Activated naive CD4-positive, alpha-beta T cell treated with anti-CD3 and anti-CD28 coated beads for 36 hours (primary cell): ENCODE measurements at regions of chr7 and their contacts with region 1.

Region 1: GRCh38 chr7:5704534-5704922 is 76.9 kb downstream of the RNF216 start:
- DNase-seq: peak; percentile 92
- H3K4me3 Mint-ChIP-seq: no peak overlapping the region
- H3K27ac Mint-ChIP-seq: no peak overlapping the region
- H3K4me1 Mint-ChIP-seq: peaks cover 75% of the 10 kb centered on the region
- H3K27me3 Mint-ChIP-seq: no peaks in the 10 kb centered on the region

Region 2: DNA sequence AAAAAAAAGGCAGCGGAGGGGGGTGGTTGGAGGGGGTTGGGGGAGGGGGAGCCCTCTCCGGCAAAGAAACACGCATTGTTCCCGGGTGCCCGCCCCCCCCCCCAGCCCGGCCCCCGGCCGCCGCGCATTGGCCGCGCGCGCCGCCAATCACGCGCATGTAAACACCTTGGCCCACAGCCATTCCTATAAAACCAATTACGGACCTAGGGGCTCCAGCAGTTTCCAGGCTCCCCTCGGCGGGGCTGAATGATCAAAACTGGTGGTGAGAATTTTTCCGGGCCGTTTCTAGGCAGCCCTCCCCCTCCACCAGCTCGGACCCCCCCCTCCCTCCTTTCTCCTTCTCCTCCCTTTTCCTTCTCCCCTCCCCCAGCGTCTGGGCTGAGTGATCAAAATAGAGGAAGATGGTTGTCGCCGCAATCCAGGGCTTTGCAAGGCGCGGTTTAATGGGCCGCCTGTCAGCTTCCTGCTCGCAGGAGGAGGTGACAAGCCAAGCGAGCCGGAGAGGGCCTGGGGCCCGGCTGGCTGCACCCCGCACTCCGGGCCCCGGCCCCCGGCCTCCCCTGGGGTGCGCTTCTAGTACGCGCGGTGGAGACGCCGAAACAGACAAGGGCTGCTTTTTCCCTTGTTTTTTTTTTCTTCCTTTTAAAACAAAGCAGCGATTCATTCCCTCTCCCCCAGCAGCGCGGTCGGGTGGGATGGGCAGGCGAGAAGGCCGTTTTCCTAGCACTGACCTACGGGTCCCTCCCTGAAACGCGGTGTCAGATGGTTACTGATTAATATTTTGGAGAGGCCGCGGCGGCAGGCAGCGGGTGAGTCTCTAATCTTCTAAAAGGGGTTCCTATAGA is 280.5 kb before region 1 on chr7:
- CTCF ChIA-PET with region 1: no interaction called
- intact Hi-C with region 1: loop called (anchors 5 kb)
- DNase-seq: peak; percentile 62
- H3K4me3 Mint-ChIP-seq: peak overlapping the region; percentile 67
- H3K27ac Mint-ChIP-seq: peak overlapping the region; percentile 24
- H3K4me1 Mint-ChIP-seq: peaks cover 43% of the 10 kb centered on the region
- H3K27me3 Mint-ChIP-seq: peaks cover 64% of the 10 kb centered on the region

Region 3: DNA sequence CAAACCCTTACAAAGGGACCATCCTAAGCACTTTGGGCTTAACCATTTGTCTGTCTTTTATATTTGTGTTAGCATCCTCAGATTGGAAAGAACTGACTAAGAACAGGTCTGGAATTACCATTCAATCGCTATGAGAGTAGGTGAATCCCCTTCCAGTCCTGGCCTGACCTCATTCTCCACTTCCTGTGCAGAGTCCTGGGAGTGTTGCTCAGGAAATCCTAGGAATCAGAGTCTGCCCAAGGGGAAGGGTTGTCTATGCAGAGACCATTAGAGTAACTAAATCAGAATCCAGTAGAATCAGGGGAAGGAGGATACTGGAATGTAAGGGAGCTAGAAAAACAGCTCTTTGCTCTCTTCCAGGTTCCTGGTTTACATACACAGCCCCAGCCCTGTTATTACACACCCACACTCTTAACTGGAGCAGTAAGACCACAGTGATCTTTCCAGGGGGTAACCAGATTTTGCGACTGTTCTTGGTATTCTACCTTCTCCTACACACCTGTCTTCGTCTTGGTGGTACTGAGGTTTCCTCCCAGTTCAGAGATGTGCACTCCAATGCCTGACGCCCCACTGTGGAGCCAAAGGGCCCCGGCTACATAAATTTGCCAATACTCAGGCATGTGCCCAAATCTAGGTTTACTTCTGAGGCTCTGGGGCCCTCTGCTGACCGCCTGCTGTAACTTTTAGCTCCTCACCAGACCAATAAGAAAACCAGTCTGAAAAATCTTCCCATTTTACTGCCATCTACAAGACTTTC is 26.8 kb before region 1 on chr7:
- CTCF ChIA-PET with region 1: interaction called, 16 read pairs
- intact Hi-C with region 1: no loop called
- DNase-seq: peak; percentile 74
- H3K4me3 Mint-ChIP-seq: no peak overlapping the region
- H3K27ac Mint-ChIP-seq: peak overlapping the region; percentile 3
- H3K4me1 Mint-ChIP-seq: peaks cover 50% of the 10 kb centered on the region
- H3K27me3 Mint-ChIP-seq: no peaks in the 10 kb centered on the region

Region 4: GRCh38 chr7:5689118-5689517 is 15.4 kb before region 1 on chr7:
- CTCF ChIA-PET with region 1: interaction called, 54 read pairs
- intact Hi-C with region 1: loop called (anchors 1 kb)
- DNase-seq: peak; percentile 86
- H3K4me3 Mint-ChIP-seq: peak overlapping the region; percentile 61
- H3K27ac Mint-ChIP-seq: peak overlapping the region; percentile 93
- H3K4me1 Mint-ChIP-seq: peaks cover 96% of the 10 kb centered on the region
- H3K27me3 Mint-ChIP-seq: no peaks in the 10 kb centered on the region